CD4-positive, alpha-beta memory T cell (primary cell): ENCODE measurements at regions of chr1 and their contacts with region 1.

Region 1: DNA sequence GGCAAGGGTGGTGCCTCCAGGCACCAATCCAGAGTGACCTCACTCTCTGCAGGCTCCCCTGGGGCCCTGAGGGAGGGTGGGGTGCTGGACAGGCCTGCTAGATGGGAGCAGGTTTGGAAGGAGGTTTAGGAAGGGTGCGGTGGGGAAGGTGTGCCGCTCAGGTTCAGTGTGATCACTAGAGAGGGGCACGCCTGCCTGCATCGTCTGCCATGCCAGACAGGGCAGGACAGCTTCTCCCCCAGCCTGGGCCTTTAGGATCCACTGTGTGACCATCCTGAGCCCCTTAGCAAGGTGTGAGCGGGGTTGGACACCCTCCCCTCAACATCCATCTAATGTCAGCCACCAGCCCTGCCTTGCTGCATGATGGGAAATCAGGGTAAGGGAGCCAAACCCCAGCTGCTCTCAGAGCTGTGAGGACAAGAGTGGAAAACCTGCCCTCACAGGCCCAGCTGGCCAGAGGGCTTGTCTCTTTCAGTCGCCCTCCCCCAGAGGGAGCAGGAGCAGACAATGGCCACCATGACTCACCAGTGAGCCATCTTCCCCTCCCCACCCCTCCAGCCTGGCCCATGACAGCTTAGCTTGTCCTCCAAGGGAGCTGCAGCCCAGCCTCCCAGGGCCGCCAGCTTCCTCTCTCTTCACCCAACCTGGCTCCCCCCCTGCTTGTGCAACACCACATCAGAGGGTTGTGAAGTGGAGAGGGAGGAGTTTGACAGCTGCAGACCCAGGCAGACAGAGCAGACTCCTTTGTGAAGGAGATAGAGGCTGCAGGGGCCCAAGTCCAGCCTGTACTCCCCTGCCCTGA is 37.0 kb downstream of the NUAK2 start:
- DNase-seq: peak; percentile 88 to 97 (median 90)
- H3K4me3 ChIP-seq: peak overlapping the region; percentile 56 to 71
- H3K4me3 Mint-ChIP-seq: peak overlapping the region; percentile 74 to 89 (median 84)
- H3K27ac ChIP-seq: peak overlapping the region; percentile 62
- H3K27ac Mint-ChIP-seq: peak overlapping the region; percentile 86 to 98 (median 95)
- H3K4me1 ChIP-seq: peaks cover 87% of the 10 kb centered on the region
- H3K4me1 Mint-ChIP-seq: peaks cover 64 to 89% (median 78%) of the 10 kb centered on the region in 4 donors
- H3K27me3 ChIP-seq: no peaks in the 10 kb centered on the region
- H3K27me3 Mint-ChIP-seq: no peaks in the 10 kb centered on the region

Region 2: DNA sequence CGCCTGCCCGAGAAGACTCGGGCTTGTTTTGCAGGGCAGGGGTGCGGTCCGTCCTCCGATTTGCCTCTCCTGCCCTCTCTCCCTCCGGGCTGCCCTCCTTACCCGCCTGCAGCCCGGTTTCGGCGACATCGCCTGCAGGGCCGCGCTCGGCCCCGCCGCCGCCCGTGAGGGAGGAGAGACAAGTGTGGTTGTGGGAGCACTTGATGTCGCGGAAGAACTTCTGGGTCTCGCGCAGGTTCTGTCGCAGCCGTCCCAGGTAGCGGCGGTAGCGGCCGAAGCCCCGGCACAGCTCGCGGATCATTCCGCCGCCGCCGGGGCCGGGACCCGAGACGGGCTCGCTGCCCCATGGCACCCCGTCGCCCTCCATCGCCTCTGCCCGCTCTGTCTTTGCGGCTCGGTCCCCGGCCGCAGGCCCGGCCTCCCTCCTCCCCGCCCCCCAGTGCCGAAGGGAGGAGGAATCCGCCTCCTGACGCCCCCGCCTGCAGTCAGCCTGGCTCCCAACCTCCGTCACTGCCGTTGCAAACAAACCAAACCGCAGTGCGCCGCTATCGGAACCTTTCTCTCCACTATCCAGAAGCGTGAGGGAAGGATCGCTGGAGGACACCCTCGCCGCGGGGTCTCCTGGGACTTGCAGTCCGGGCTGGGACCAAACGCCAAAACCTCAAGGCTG is 73.2 kb before region 1 on chr1 and contains the start of gene DSTYK:
- CTCF ChIA-PET with region 1: no interaction called
- POLR2A ChIA-PET with region 1: interaction called, 9 read pairs
- intact Hi-C with region 1: loop called (anchors 2 kb)
- DNase-seq: peak; percentile 91 to 94 (median 93)
- H3K4me3 ChIP-seq: peak within 1 kb of the TSS; percentile 67 to 82
- H3K4me3 Mint-ChIP-seq: peak within 1 kb of the TSS; percentile 89 to 98 (median 96)
- H3K27ac ChIP-seq: peak within 1 kb of the TSS; percentile 80
- H3K27ac Mint-ChIP-seq: peak within 1 kb of the TSS; percentile 96 to 99 (median 97)
- H3K4me1 ChIP-seq: peaks cover 29% of the 10 kb centered on the region
- H3K4me1 Mint-ChIP-seq: peaks cover 22 to 48% (median 34%) of the 10 kb centered on the region in 4 donors
- H3K27me3 ChIP-seq: no peaks in the 10 kb centered on the region
- H3K27me3 Mint-ChIP-seq: peaks cover 0 to 5% of the 10 kb centered on the region in 2 donors
- total RNA-seq, gene DSTYK: 16.4 to 16.6 TPM

Region 3: GRCh38 chr1:205227584-205228006 is 56.9 kb before region 1 on chr1 and contains the start of gene TMCC2:
- CTCF ChIA-PET with region 1: interaction called, 4 read pairs
- POLR2A ChIA-PET with region 1: interaction called, 11 read pairs
- intact Hi-C with region 1: loop called (anchors 2 kb)
- DNase-seq: peak; percentile 67 to 79 (median 70)
- H3K4me3 ChIP-seq: peak within 1 kb of the TSS; percentile 54 to 57
- H3K4me3 Mint-ChIP-seq: peak within 1 kb of the TSS; percentile 88 to 99 (median 94)
- H3K27ac ChIP-seq: no peak within 1 kb of the TSS
- H3K27ac Mint-ChIP-seq: peak within 1 kb of the TSS; percentile 53 to 97 (median 85)
- H3K4me1 ChIP-seq: peaks cover 25% of the 10 kb centered on the region
- H3K4me1 Mint-ChIP-seq: peaks cover 14 to 33% (median 23%) of the 10 kb centered on the region in 4 donors
- H3K27me3 ChIP-seq: peaks cover 5% of the 10 kb centered on the region
- H3K27me3 Mint-ChIP-seq: peaks cover 8 to 18% of the 10 kb centered on the region in 2 donors
- total RNA-seq, gene TMCC2: 0.90 to 1.2 TPM

Region 4: DNA sequence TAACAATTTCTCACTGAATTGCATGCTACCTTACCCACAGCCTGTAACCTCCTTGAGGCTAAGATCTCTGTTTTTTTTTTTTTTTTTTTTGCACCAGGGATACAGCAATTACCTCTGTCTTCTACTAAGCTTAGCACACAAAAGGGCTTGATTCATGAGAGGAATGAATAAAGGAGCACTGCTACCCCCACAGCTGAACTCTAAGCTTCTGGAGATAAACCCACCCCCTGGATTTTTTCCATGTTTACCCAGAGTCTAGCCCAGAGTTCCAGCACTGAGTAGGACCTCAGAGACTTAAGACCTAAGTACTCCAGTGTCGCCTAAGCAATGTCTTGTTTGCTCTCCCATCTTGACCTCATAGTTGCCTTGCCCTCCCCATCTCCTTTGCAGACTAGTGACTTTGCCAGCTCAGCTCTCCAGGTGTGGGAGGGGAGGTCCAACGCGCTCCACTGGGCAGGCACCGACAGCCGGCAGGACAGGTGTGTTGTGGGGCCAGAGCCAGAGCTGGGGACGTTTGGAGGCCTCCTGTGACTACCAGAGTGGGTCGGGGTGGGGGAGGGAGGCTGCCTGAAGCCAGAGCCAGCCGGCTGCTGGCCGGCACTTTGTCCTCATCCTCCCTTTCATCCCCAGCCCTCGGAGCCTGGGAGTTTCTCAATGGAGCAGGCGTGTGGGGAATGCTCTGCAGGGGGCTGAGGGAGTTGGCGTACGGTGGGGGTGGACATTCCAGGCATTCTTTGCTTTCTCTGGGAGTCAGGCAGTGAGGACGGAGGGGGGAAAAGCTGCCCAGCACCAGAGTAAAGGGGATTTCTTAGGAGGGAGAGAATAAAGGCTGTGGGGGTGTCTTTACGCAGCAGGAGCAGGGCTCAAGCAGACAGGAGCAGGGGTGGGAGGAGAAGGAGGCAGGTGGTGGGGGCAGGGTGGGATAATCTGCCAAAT is 16.6 kb after region 1 on chr1:
- CTCF ChIA-PET with region 1: interaction called, 12 read pairs
- POLR2A ChIA-PET with region 1: interaction called, 159 read pairs
- intact Hi-C with region 1: loop called (anchors 1 kb)
- DNase-seq: no peak
- H3K4me3 ChIP-seq: no peak overlapping the region
- H3K4me3 Mint-ChIP-seq: no peak overlapping the region
- H3K27ac ChIP-seq: no peak overlapping the region
- H3K27ac Mint-ChIP-seq: peak overlapping the region in 3 of 7 donors; percentile 9 to 35 (median 34)
- H3K4me1 ChIP-seq: peaks cover 29% of the 10 kb centered on the region
- H3K4me1 Mint-ChIP-seq: peaks cover 31 to 61% (median 44%) of the 10 kb centered on the region in 4 donors
- H3K27me3 ChIP-seq: no peaks in the 10 kb centered on the region
- H3K27me3 Mint-ChIP-seq: no peaks in the 10 kb centered on the region

Region 5: DNA sequence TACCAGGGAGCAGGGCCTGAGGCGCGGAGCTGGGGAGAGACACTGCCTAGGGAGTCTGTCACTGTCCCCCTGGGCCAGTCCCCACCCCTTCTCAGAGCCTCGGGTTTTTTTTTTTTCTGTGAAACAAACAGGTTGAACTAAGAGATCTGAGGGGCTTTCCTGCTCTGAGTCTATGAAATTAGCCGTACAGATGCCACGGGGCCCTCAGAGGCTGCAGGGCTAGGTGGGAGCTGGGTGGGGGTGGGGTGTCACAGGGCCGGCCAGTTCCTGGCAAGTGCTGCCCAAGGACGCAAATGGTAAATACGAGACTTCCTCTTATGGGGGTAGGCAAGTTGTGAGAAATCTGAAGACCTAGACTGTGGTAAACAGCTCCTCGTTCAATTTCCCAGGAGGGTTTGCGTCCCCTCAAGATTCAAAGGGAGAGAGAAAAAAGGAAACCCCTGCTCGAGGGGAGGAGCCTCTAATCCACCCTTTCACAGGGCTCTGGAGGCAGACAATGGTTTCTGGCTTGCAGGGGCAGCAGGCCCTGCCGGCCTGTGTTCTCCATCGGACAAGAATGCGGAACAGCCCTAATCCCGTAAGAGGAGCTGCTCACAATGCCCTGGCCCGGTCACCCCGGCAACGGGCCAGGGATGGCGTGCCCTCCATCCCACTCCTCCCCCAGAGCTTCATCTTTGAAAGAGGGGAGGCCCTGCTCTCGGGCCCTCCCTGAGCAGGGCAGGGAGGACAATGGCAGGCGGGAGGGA is 29.2 kb after region 1 on chr1:
- CTCF ChIA-PET with region 1: interaction called, 1,429 read pairs
- POLR2A ChIA-PET with region 1: interaction called, 1,030 read pairs
- intact Hi-C with region 1: loop called (anchors 1 kb)
- DNase-seq: peak in 2 of 5 donors; percentile 18 to 54
- H3K4me3 ChIP-seq: peak overlapping the region; percentile 17 to 20
- H3K4me3 Mint-ChIP-seq: peak overlapping the region; percentile 82 to 93 (median 86)
- H3K27ac ChIP-seq: peak overlapping the region; percentile 2
- H3K27ac Mint-ChIP-seq: peak overlapping the region; percentile 81 to 95 (median 88)
- H3K4me1 ChIP-seq: peaks cover 86% of the 10 kb centered on the region
- H3K4me1 Mint-ChIP-seq: peaks cover 66 to 95% (median 78%) of the 10 kb centered on the region in 4 donors
- H3K27me3 ChIP-seq: no peaks in the 10 kb centered on the region
- H3K27me3 Mint-ChIP-seq: no peaks in the 10 kb centered on the region

Region 6: DNA sequence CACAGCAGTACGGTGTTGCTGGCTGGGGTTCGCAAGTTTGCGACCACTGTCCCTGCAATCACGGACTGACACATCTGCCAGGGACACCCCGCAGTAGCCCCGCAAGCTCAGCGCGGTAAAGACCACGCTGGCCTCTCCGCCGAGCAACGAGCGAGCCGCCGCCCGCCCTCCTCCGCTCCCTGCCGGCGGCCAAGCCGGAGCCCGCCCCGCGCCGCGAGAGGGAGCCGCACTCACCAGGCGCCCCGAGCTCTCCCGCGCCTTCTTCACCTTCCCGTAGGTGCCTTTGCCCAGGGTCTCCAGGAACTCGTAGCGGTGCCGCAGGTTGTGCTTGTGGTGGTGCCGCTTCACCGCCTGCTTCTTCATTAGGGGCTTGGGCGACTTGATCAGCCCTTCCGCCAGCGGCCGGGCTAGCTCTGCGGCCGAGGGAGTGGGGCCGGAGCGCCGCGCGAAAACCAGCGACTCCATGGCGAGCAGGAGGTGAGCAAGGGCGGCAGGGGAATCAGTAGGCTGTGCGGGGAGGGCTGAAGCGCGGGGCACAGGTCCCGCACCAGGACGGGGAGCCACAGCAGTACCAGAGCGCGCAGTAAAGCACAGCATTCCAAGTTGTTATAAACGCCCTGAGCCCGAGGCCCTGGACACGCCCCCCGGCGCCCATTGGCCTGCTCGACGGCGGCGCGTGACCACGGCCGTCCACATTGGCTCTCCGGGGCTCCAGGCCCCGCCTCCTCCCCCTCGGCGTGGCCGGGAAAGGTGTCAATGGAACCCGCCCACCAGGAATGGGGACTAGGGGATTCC is 36.8 kb after region 1 on chr1 and contains the start of gene NUAK2:
- CTCF ChIA-PET with region 1: interaction called, 1,429 read pairs
- POLR2A ChIA-PET with region 1: interaction called, 1,030 read pairs
- intact Hi-C with region 1: loop called (anchors 1 kb)
- DNase-seq: peak; percentile 80 to 83 (median 81)
- H3K4me3 ChIP-seq: peak within 1 kb of the TSS; percentile 79 to 99
- H3K4me3 Mint-ChIP-seq: peak within 1 kb of the TSS; percentile 95 to 100 (median 98)
- H3K27ac ChIP-seq: peak within 1 kb of the TSS; percentile 74
- H3K27ac Mint-ChIP-seq: peak within 1 kb of the TSS; percentile 83 to 97 (median 90)
- H3K4me1 ChIP-seq: peaks cover 56% of the 10 kb centered on the region
- H3K4me1 Mint-ChIP-seq: peaks cover 49 to 80% (median 68%) of the 10 kb centered on the region in 4 donors
- H3K27me3 ChIP-seq: no peaks in the 10 kb centered on the region
- H3K27me3 Mint-ChIP-seq: no peaks in the 10 kb centered on the region
- total RNA-seq, gene NUAK2: 32.5 to 32.8 TPM

Region 7: DNA sequence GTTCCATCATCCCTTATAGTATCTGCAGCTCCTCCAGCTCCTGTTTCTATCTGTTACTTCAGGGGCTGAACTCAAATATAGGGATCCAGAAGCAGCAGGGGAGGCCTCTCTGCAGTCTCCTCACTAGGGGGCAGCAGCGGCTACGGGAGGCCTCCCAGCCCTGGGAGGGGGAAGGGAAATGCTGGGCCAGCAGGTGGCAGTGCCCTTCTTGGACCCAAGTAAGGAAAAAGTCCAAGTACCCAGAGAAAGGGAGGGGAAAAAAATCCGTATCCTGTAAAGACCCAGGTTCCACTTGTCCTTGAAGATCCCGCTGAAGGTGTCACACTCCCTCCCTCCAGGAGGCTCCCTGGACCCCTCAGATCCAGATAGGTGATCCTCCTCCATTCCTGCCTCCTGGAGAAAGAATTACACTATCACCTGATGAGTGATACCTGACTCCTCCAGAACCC is 51.1 kb after region 1 on chr1:
- CTCF ChIA-PET with region 1: interaction called, 1,429 read pairs
- POLR2A ChIA-PET with region 1: interaction called, 1,030 read pairs
- intact Hi-C with region 1: no loop called
- DNase-seq: peak; percentile 68 to 72 (median 70)
- H3K4me3 ChIP-seq: no peak overlapping the region
- H3K4me3 Mint-ChIP-seq: no peak overlapping the region
- H3K27ac ChIP-seq: no peak overlapping the region
- H3K27ac Mint-ChIP-seq: no peak overlapping the region
- H3K4me1 ChIP-seq: no peaks in the 10 kb centered on the region
- H3K4me1 Mint-ChIP-seq: peaks cover 0 to 2% (median 0%) of the 10 kb centered on the region in 4 donors
- H3K27me3 ChIP-seq: no peaks in the 10 kb centered on the region
- H3K27me3 Mint-ChIP-seq: peaks cover 0 to 2% of the 10 kb centered on the region in 2 donors

Region 8: GRCh38 chr1:206430031-206430983 is 1145.8 kb after region 1 on chr1:
- CTCF ChIA-PET with region 1: no interaction called
- POLR2A ChIA-PET with region 1: no interaction called
- intact Hi-C with region 1: no loop called
- DNase-seq: no peak
- H3K4me3 ChIP-seq: no peak overlapping the region
- H3K4me3 Mint-ChIP-seq: no peak overlapping the region
- H3K27ac ChIP-seq: no peak overlapping the region
- H3K27ac Mint-ChIP-seq: no peak overlapping the region
- H3K4me1 ChIP-seq: no peaks in the 10 kb centered on the region
- H3K4me1 Mint-ChIP-seq: no peaks in the 10 kb centered on the region
- H3K27me3 ChIP-seq: no peaks in the 10 kb centered on the region
- H3K27me3 Mint-ChIP-seq: no peaks in the 10 kb centered on the region